Gastrocnemius medialis (tissue), 4 donors: ENCODE measurements at regions of chr11 and their contacts with region 1.

Region 1: GRCh38 chr11:95150946-95151684 is 61.5 kb downstream of the ENDOD1 start:
- DNase-seq: peak; percentile 85 to 86
- ATAC-seq: peak; percentile 84 to 86
- H3K4me3 ChIP-seq: peak overlapping the region; percentile 63 to 73 (median 72)
- H3K27ac ChIP-seq: peak overlapping the region; percentile 80 to 89 (median 84)
- H3K4me1 ChIP-seq: peaks cover 30 to 31% of the 10 kb centered on the region in 2 donors
- H3K27me3 ChIP-seq: no peaks in the 10 kb centered on the region
- CTCF ChIP-seq: peak; percentile 80 to 93 (median 83)
- POLR2A ChIP-seq: peak; percentile 49 to 60

Region 2: GRCh38 chr11:94973099-94973968 is 177.8 kb before region 1 on chr11 and contains the starts of genes CWC15 and KDM4D:
- in situ Hi-C with region 1: no loop called
- intact Hi-C with region 1: loop called (anchors 5 kb)
- DNase-seq: peak; percentile 92 to 93
- ATAC-seq: peak; percentile 100
- H3K4me3 ChIP-seq: peak within 1 kb of the TSS; percentile 82 to 97 (median 90)
- H3K27ac ChIP-seq: peak within 1 kb of the TSS; percentile 78 to 88 (median 80)
- H3K4me1 ChIP-seq: peaks cover 14 to 17% of the 10 kb centered on the region in 2 donors
- H3K27me3 ChIP-seq: no peaks in the 10 kb centered on the region
- CTCF ChIP-seq: no peak
- POLR2A ChIP-seq: peak; percentile 40 to 56
- total RNA-seq, gene CWC15: 53.9 to 69.5 (median 60.5) TPM
- total RNA-seq, gene KDM4D: 0.12 to 1.5 (median 0.56) TPM

Region 3: GRCh38 chr11:95089620-95090542 is 61.2 kb before region 1 on chr11 and contains the start of gene ENDOD1:
- in situ Hi-C with region 1: no loop called
- intact Hi-C with region 1: loop called (anchors 1 kb)
- DNase-seq: peak; percentile 59 to 72
- ATAC-seq: peak; percentile 86 to 87
- H3K4me3 ChIP-seq: peak within 1 kb of the TSS; percentile 69 to 97 (median 74)
- H3K27ac ChIP-seq: peak within 1 kb of the TSS; percentile 84 to 97 (median 89)
- H3K4me1 ChIP-seq: peaks cover 38 to 42% of the 10 kb centered on the region in 2 donors
- H3K27me3 ChIP-seq: no peaks in the 10 kb centered on the region
- CTCF ChIP-seq: peak in 4 of 5 experiments; percentile 11 to 26 (median 16)
- POLR2A ChIP-seq: peak; percentile 84 to 88
- total RNA-seq, gene ENDOD1: 17.5 to 35.2 (median 27.6) TPM

Region 4: DNA sequence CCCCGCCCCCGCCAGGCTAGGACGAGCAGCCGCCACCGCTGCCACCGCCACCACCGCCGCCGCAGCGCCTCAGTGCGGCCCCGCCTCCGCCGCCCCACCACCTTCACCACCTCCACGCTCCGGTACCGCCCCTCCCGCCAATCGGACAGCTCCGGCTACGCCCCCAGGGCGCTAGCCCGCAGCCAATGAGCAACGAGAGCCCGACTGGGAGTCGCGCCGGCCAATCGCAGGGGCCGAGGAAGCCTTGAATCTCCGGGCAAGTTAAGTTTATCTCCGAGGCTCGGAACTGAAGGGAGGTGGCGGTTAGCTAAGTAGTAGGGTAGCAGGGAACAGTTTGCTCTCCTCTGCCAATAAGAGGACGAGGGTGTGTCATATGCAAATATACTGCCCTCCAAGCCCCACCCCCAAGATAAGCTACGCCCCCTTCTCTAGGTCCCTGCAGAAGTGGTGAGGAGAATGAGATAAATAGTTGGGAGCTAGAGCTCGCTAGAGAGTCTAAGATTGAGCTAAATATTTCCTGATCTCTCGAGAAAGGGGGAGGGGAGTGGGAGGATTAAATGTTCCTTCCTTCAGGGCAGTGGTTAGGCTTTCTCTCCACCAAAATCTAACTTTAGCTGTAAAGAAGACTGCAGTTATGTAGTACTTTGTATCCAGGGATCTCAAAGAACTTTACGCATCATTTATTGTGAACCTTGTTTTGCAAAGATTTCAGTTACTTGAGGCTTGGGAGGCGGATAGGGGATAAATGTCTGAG is 80.2 kb after region 1 on chr11 and contains the start of gene SESN3:
- in situ Hi-C with region 1: no loop called
- intact Hi-C with region 1: loop called (anchors 2 kb)
- DNase-seq: peak; percentile 98
- ATAC-seq: peak; percentile 99
- H3K4me3 ChIP-seq: peak within 1 kb of the TSS; percentile 73 to 83 (median 76)
- H3K27ac ChIP-seq: peak within 1 kb of the TSS; percentile 68 to 79 (median 70)
- H3K4me1 ChIP-seq: peaks cover 22 to 25% of the 10 kb centered on the region in 2 donors
- H3K27me3 ChIP-seq: no peaks in the 10 kb centered on the region
- CTCF ChIP-seq: peak in 1 of 5 experiments; percentile 9
- POLR2A ChIP-seq: peak; percentile 37 to 77
- total RNA-seq, gene SESN3: 6.0 to 10.8 (median 7.8) TPM

Region 5: DNA sequence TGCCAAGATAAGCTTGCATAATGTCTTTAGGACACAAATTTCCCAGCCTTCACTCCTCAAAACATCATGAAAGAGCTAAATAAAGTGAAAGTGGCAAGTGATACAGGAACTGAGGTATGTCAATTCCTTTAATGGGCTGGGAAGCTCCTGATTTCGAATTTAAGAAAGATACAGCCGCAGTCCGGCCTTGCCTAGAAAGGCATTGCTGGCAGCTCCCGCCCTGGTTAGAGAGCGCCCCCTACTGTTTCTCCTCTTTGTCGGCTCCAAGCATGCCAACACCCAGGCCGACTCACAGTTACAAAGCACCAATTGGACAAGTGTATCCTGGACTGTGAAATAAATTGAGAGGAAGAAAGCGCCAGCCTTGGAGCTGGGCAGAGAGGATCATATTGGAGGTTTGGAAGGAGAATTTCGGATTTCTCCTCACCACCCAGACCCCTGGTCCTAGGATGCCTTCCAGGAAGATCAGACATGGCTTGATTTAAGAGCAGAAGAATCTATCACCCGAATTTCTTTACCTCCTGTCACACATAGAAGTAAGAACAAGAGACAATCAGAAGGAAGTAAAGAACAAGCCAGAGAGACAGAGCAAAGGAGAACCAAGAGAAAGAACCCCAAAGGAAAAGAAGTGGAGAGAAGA is 554.5 kb after region 1 on chr11:
- in situ Hi-C with region 1: loop called in 2 of 4 experiments (anchors 5 to 10 kb)
- intact Hi-C with region 1: loop called (anchors 1 kb)
- DNase-seq: peak; percentile 71 to 75
- ATAC-seq: peak; percentile 95 to 97
- H3K4me3 ChIP-seq: peak overlapping the region in 1 of 4 donors; percentile 12
- H3K27ac ChIP-seq: peak overlapping the region; percentile 29 to 65 (median 48)
- H3K4me1 ChIP-seq: peaks cover 0 to 8% of the 10 kb centered on the region in 2 donors
- H3K27me3 ChIP-seq: no peaks in the 10 kb centered on the region
- CTCF ChIP-seq: peak; percentile 81 to 91 (median 82)
- POLR2A ChIP-seq: no peak

Region 6: DNA sequence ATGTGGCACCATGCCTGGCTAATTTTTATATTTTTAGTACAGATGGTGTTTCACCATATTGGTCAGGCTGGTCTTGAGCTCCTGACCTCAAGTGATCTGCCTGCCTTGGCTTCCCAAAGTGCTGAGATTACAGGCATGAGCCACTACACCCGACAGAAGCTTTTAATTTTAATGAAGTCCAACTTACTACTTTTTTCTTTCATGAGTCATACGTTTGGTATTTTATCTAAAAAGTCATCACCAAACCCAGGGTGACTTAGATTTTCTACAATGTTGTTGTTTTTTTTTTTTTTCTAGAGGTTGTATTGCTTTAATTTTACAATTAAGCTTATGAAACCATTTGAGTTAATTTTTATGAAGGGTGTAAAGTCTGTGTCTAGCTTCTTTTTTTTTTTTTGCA is 1273.6 kb after region 1 on chr11:
- in situ Hi-C with region 1: no loop called
- intact Hi-C with region 1: loop called (anchors 5 kb)
- DNase-seq: no peak
- ATAC-seq: no peak
- H3K4me3 ChIP-seq: no peak overlapping the region
- H3K27ac ChIP-seq: no peak overlapping the region
- H3K4me1 ChIP-seq: no peaks in the 10 kb centered on the region
- H3K27me3 ChIP-seq: peaks cover 0 to 3% (median 0%) of the 10 kb centered on the region in 3 donors
- CTCF ChIP-seq: no peak
- POLR2A ChIP-seq: no peak